ENCODE measurements at regions of chr5 and their contacts with region 1.

Region 1: GRCh38 chr5:180470966-180471582 is 23.1 kb upstream of the CNOT6 start:
- DNase-seq: no peak
- H3K4me3 ChIP-seq: no peak overlapping the region
- H3K27me3 ChIP-seq: no peaks in the 10 kb centered on the region; the same call in none of the 2 replicates
- CTCF ChIP-seq: peak; percentile 91

Region 2: DNA sequence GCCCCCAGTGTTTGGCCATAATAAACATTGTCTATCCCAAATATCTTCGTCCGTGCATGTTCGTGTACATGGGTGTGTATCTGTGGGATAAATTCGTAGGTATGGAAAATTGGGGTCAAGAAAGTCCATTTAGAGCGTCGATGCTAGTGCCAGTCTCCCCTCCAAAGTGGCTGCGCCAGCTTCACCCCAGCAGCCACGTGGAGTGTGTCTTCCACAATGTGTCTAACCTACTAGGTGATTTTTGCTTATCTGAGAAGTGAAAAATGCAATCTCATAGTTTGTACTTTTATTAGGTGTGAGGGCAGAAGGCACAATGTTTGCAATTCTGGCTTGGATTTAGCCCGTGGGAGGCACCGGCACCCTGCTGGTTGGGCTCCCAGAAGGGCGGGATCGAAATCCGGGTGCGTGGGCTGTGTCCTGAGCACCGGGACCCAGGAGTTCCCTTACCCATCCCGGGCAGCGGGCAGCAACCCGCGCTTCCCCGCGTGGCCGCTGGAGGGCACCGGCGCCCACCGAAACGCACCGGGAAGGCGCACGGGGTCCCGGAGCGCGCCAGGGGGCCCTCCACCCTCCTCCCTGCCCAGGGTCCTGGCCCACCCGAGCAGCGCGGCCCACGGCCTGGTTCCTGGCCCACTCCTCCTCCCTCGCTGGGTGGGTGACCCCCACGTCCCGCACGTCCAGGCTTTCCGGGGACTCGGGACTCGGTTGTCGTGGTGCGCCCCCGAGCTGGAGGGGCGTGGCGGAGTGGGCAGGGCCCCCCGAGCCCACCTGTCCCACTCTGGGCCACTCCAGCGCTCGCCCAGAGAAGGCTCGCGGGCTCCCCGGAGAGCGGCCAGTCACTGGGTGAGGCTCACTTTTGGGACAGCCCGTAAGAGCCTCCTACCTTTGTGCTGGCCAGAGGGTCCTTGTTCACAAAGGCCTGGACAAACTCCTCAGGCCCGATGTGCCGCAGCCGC is 344.1 kb before region 1 on chr5:
- CTCF ChIA-PET with region 1: interaction called, 11 read pairs
- POLR2A ChIA-PET with region 1: no interaction called
- DNase-seq: no peak
- H3K4me3 ChIP-seq: no peak overlapping the region
- H3K27me3 ChIP-seq: no peaks in the 10 kb centered on the region; the same call in 1 of the 2 replicates
- CTCF ChIP-seq: peak; percentile 62

Region 3: DNA sequence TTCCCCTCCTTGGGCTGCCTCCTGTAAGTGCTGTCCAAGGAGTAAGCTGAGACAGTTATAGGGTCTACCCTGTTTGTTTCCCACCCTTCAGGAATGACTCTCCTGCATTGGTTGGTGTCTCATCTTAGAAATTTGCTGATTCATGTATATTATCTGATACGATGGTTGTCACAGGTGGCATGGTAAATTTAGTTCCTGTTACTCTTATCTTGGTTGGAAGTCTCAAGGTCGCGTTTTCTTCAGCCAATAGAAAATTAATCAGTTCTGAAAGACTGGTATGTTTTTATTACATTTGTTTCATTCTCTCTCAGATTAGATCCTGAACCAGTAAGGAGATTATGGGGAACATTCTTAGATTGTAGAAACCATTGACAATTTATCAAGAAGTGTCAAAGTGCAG is 77.5 kb after region 1 on chr5:
- CTCF ChIA-PET with region 1: no interaction called
- POLR2A ChIA-PET with region 1: no interaction called
- DNase-seq: no peak
- H3K4me3 ChIP-seq: no peak overlapping the region
- H3K27me3 ChIP-seq: no peaks in the 10 kb centered on the region
- CTCF ChIP-seq: no peak